Mucosa of descending colon (tissue), 3 donors: ENCODE measurements at regions of chr21 and their contacts with region 1.

Region 1: DNA sequence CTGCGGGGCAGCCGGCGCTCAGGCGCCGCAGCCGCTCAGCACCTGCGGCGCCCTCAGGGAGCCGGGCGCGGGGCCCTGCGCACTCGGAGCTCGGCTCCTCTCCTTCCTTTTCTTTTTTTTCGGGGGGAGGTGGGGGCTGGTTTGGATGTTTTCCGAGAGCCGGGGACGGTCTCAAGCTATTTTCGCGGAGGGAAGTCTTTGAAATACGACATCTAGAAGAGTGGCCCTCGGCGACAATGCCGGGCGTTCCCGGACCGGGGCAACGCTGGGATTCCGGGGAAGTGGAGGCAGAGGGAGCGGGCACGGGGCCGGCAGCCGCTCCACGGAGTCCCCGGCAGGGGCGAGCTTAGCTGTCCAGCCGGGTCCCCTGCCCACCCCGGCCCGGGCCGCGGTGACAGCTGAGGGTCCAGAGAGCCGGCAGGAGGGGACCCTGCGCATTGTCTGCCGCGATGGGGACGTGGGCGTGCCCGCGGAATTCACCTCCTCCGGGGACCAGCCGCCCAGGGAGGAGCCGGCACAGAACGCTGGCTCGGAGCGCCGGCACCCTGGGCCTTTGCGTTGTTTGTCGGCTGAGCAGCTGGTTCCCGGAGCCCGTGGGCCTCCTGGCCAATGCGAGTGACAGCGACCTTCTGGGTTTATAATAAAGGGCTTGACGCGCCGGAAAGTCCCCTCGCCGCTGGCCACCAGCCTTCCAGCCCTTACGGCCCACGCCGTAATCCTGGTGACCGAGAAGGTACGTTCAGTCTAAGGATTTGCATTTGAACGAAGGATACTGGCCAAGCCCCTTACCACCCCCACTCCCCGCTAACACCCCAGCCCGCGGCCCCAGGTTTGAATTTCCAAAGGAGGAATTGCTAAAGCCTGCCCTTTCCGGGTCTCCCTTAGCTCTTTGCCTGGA is 582 bp downstream of the SLC37A1 start:
- DNase-seq: peak; percentile 77 to 84 (median 84)
- ATAC-seq: peak; percentile 76
- H3K4me3 ChIP-seq: peak overlapping the region; percentile 72
- H3K4me1 ChIP-seq: peaks cover 20% of the 10 kb centered on the region
- CTCF ChIP-seq: no peak

Region 2: GRCh38 chr21:42319376-42319775 is 194.9 kb before region 1 on chr21:
- intact Hi-C with region 1: no loop called
- DNase-seq: peak in 2 of 3 donors; percentile 47 to 64
- ATAC-seq: peak; percentile 24
- H3K4me3 ChIP-seq: no peak overlapping the region
- H3K4me1 ChIP-seq: peaks cover 20% of the 10 kb centered on the region
- CTCF ChIP-seq: no peak

Region 3: GRCh38 chr21:42467140-42467983 is 46.9 kb before region 1 on chr21:
- intact Hi-C with region 1: loop called in 1 of 2 experiments (anchors 10 kb)
- DNase-seq: peak; percentile 43 to 54 (median 46)
- ATAC-seq: no peak
- H3K4me3 ChIP-seq: no peak overlapping the region
- H3K4me1 ChIP-seq: peaks cover 52% of the 10 kb centered on the region
- CTCF ChIP-seq: no peak